Activated CD4-positive, alpha-beta memory T cell treated with anti-CD3 and anti-CD28 coated beads, Interleukin-2, amount 10 ng/mL, durations not matched to agents 7 days and 5 days (primary cell): ENCODE measurements at regions of chr17 and their contacts with region 1.

Region 1: GRCh38 chr17:3738562-3739295 is 15.0 kb downstream of the HASPIN start:
- DNase-seq: peak; percentile 67
- H3K4me3 Mint-ChIP-seq: no peak overlapping the region
- H3K27ac Mint-ChIP-seq: peak overlapping the region; percentile 7
- H3K4me1 Mint-ChIP-seq: peaks cover 42% of the 10 kb centered on the region
- H3K27me3 Mint-ChIP-seq: peaks cover 2% of the 10 kb centered on the region

Region 2: GRCh38 chr17:3683054-3683511 is 55.6 kb before region 1 on chr17:
- CTCF ChIA-PET with region 1: interaction called, 21 read pairs
- POLR2A ChIA-PET with region 1: no interaction called
- DNase-seq: peak; percentile 67
- H3K4me3 Mint-ChIP-seq: no peak overlapping the region
- H3K27ac Mint-ChIP-seq: no peak overlapping the region
- H3K4me1 Mint-ChIP-seq: peaks cover 27% of the 10 kb centered on the region
- H3K27me3 Mint-ChIP-seq: no peaks in the 10 kb centered on the region

Region 3: DNA sequence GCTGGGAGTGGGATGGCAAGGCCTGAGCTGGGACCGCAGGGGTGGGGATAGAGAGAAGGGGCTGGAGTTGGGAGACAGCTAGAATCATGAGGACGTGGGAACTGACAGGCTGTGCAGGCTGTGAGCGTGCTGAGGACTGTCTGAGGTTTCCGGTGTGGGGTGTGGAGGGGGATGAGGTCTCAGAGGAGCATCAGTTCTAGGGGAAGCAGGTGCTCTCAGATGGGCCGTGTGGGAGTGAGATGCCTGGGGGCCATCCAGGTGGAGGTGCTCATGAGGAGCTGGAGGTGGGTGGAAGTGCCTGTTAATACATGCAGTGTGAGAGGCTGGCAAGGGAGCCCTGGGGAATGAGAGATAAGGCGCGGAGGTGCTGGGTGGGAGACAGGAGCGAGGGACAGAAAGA is 12.2 kb after region 1 on chr17:
- CTCF ChIA-PET with region 1: interaction called, 16 read pairs
- POLR2A ChIA-PET with region 1: interaction called, 19 read pairs
- DNase-seq: peak; percentile 76
- H3K4me3 Mint-ChIP-seq: peak overlapping the region; percentile 73
- H3K27ac Mint-ChIP-seq: peak overlapping the region; percentile 82
- H3K4me1 Mint-ChIP-seq: peaks cover 50% of the 10 kb centered on the region
- H3K27me3 Mint-ChIP-seq: peaks cover 3% of the 10 kb centered on the region

Region 4: GRCh38 chr17:3780986-3781385 is 42.3 kb after region 1 on chr17:
- CTCF ChIA-PET with region 1: interaction called, 13 read pairs
- POLR2A ChIA-PET with region 1: no interaction called
- DNase-seq: no peak
- H3K4me3 Mint-ChIP-seq: no peak overlapping the region
- H3K27ac Mint-ChIP-seq: no peak overlapping the region
- H3K4me1 Mint-ChIP-seq: peaks cover 6% of the 10 kb centered on the region
- H3K27me3 Mint-ChIP-seq: peaks cover 14% of the 10 kb centered on the region

Region 5: DNA sequence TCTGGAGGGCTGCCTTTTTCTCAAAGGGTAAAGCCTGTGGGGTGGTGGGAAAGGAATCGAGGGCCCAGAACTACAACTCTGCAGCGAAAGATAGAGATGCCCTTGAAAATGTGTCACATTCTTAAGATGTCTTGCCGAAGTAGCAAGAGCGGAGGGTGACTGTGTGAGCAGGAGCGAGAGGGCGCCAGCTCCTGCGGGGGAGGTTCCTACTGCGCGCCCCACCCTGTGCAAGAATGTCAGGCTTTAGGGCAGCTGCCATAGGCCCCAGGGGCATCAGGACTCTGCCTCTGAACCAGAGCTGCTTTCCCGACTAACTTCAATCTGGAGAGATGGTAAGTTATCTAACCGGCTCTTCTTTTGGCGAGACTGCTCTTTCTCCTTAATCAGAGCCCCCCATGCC is 74.0 kb after region 1 on chr17:
- CTCF ChIA-PET with region 1: interaction called, 25 read pairs
- POLR2A ChIA-PET with region 1: no interaction called
- DNase-seq: no peak
- H3K4me3 Mint-ChIP-seq: no peak overlapping the region
- H3K27ac Mint-ChIP-seq: no peak overlapping the region
- H3K4me1 Mint-ChIP-seq: peaks cover 7% of the 10 kb centered on the region
- H3K27me3 Mint-ChIP-seq: no peaks in the 10 kb centered on the region

Region 6: GRCh38 chr17:3827124-3827773 is 88.5 kb after region 1 on chr17:
- CTCF ChIA-PET with region 1: interaction called, 206 read pairs
- POLR2A ChIA-PET with region 1: interaction called, 40 read pairs
- DNase-seq: peak; percentile 76
- H3K4me3 Mint-ChIP-seq: no peak overlapping the region
- H3K27ac Mint-ChIP-seq: peak overlapping the region; percentile 36
- H3K4me1 Mint-ChIP-seq: peaks cover 9% of the 10 kb centered on the region
- H3K27me3 Mint-ChIP-seq: no peaks in the 10 kb centered on the region

Region 7: DNA sequence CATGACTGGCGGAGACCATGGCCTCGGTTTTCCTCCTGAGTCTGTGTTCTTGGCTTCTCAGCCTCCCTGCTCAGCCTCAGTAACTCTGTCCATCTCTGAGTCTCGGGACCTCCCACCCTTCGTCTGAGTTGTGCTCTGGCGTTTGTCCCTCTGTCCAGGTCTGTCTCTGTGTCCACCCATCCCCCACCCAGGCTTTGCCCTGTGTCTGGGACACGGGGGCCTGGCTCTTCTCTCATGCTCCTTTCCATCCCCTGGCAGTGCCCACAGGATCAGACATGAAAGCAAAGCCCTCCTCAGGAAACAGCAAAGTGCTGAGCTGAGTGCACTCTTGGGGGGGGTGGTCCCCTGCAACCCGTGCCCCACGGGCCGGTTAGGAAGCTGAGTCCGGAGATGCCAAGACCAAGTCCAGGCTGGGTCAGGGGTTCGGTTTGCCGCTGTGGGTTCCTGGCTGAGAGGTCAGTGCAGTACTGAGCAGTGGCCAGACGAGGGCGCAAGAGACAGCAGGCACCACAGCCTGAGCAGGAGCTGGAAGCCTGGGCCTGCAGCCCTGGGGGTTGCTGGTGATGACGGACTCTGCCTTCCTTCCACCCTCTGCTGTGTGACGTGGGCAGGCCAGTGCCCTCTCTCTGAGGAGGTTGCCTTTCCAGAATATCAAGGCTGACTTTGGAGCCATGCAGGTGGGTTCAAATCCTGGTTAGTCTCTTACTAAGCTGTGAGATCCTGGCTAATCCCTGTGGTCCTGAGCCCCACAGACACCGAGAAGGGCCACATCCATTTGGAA is 175.0 kb after region 1 on chr17:
- CTCF ChIA-PET with region 1: interaction called, 10 read pairs
- POLR2A ChIA-PET with region 1: no interaction called
- DNase-seq: peak; percentile 86
- H3K4me3 Mint-ChIP-seq: no peak overlapping the region
- H3K27ac Mint-ChIP-seq: no peak overlapping the region
- H3K4me1 Mint-ChIP-seq: peaks cover 55% of the 10 kb centered on the region
- H3K27me3 Mint-ChIP-seq: no peaks in the 10 kb centered on the region